K562 (cell line): ENCODE measurements at regions of chr2 and their contacts with region 1.

Region 1: GRCh38 chr2:161586517-161587167 is 37.6 kb upstream of the SLC4A10 start:
- DNase-seq: peak; percentile 16 to 20 (median 18)
- ATAC-seq: peak; percentile 50; the same call in 2 of the 3 replicates
- H3K4me3 ChIP-seq: no peak overlapping the region
- H3K27ac ChIP-seq: no peak overlapping the region
- H3K4me1 ChIP-seq: no peaks in the 10 kb centered on the region
- H3K27me3 ChIP-seq: no peaks in the 10 kb centered on the region
- CTCF ChIP-seq: peak; percentile 35 to 57 (median 46); a peak in 5 of 6 replicates
- EP300 ChIP-seq: no peak
- POLR2A ChIP-seq: no peak
- RAD21 ChIP-seq: peak; percentile 47 to 70

Region 2: DNA sequence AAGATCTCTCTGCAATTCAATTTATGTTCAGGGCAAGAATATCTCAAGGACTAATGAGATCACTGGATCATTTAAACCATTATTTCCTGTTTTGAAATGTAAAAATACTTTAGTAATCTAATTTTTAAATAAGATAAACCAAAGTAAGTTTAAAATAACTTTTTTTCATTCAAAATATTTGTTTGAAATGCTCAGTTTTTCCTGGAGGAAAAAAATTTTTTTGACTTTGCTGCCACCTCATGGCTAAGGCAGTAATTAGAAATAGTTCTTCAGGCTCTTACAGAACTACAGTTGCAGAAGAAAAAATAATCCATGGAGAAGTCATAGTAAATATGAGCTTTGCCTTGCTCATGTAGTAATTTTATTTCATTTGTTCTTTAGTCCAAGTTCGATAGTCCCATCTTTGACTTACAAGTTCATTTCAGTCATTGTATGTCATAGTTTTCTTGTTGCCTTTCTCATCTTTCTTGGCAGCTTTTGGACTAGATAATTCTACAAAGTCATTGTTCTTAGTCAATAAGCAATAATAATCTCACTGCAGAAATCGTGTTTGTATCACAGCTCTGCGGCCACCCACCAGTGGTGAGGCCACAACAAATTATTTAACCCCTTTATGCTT is 360.0 kb after region 1 on chr2:
- CTCF ChIA-PET with region 1: no interaction called
- POLR2A ChIA-PET with region 1: no interaction called
- in situ Hi-C with region 1: no loop called
- intact Hi-C with region 1: loop called (anchors 5 kb)
- DNase-seq: peak in 1 of 4 experiments; percentile 3
- ATAC-seq: no peak
- H3K4me3 ChIP-seq: no peak overlapping the region
- H3K27ac ChIP-seq: no peak overlapping the region
- H3K4me1 ChIP-seq: no peaks in the 10 kb centered on the region
- H3K27me3 ChIP-seq: no peaks in the 10 kb centered on the region
- CTCF ChIP-seq: peak in 1 of 3 experiments; percentile 38; a peak in 2 of 6 replicates
- EP300 ChIP-seq: no peak
- POLR2A ChIP-seq: no peak
- RAD21 ChIP-seq: peak; percentile 34 to 54; a peak in 3 of 4 replicates